ENCODE measurements at regions of chr1 and their contacts with region 1.

Region 1: DNA sequence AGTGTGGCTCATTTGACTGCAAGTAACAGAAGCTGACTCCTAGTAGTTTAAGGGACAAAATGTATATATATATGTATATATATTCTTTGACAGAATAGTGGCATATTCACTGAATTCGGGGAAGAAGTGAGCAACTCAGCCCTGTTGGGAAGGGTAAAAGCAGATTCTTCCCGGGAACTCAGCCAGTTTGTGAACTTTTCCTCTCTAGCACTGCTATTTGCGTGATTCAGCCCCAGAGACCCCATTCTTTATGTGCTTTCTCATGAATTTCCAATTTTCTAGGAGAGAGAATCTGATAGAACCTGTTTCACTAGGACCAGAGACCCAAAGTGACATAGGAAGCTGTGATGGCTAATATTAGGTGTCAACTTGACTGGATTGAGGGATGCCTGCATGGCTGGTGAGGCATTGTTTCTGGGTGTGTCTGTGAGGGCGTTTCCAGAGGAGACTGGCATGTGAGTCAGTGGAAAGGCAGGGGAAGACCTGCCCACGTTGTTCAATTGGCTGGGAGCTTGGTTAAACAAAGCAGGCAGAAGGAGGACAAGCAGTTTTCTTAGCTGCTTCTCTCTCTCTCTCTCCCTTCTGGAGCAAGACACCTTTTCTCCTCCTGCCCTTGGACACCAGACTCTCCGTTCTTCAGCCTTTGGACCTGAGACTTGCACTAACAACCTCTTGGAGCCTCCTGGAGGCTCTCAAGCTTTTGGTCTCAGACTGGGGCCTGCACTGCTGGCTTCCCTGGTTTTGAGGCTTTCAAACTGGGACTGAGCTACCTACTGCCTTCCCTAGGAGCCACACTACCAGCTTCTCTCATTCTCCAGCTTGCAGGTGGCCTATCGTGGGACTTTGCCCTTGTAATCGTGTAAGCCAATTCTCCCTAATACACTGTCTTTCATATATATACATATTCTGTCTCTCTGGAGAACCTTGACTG is 93.4 kb upstream of the KCNK1 start:
- DNase-seq: peak; percentile 80
- H3K4me3 Mint-ChIP-seq: no peak overlapping the region
- H3K27ac Mint-ChIP-seq: peak overlapping the region; percentile 40
- H3K4me1 Mint-ChIP-seq: peaks cover 21% of the 10 kb centered on the region
- H3K27me3 Mint-ChIP-seq: no peaks in the 10 kb centered on the region
- CTCF ChIP-seq: no peak

Region 2: GRCh38 chr1:233668725-233669294 is 148.3 kb after region 1 on chr1:
- CTCF ChIA-PET with region 1: no interaction called
- intact Hi-C with region 1: loop called (anchors 5 kb)
- DNase-seq: peak; percentile 62
- H3K4me3 Mint-ChIP-seq: no peak overlapping the region
- H3K27ac Mint-ChIP-seq: peak overlapping the region; percentile 88
- H3K4me1 Mint-ChIP-seq: peaks cover 67% of the 10 kb centered on the region
- H3K27me3 Mint-ChIP-seq: no peaks in the 10 kb centered on the region
- CTCF ChIP-seq: no peak